Dendritic cell treated with granulocyte-macrophage colony-stimulating factor and Interleukin-4, amounts not matched to agents 40 ng/mL and 50 ng/mL, for 4 days (primary cell): ENCODE measurements at regions of chr12 and their contacts with region 1.

Region 1: DNA sequence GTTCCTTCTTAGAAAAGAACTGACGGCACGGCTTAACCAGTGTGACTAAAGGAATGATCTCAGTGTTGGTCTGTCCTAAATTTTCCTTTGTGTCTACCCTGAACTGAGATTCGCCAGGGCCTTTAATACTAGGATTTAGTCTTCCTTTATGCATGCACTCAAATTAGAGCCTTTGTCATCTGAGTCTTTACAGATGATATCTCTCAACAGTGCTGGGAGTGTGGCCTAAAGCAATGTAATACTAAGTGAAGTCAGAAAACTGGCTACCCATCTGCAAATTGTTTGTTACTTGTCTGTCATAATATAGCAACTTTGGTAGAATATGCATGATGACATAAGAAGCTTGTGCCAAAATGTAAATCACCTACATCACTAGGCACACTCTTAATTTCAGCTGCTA is 95.4 kb downstream of the PTPRO start:
- H3K4me3 Mint-ChIP-seq: no peak overlapping the region
- H3K27ac Mint-ChIP-seq: no peak overlapping the region
- H3K4me1 Mint-ChIP-seq: peaks cover 10% of the 10 kb centered on the region
- H3K27me3 Mint-ChIP-seq: peaks cover 20% of the 10 kb centered on the region

Region 2: DNA sequence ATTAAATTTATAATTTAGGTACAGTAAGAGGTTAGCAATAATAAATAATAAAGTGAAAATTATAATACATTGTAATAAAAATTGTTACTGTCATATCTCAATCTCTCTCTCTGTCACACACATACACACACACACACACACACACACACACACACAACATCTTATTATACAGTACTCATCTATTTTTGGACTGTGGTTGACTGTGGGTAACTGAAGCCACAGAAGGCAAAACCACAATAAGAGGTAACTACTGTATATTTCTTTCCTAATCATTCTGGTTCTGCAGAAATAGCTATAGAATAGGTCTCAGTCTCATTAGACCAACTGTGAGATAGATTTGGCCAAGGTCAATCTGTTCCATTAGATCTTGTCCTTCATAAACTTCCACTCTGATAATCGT is 128.5 kb before region 1 on chr12:
- intact Hi-C with region 1: loop called (anchors 10 kb)
- H3K4me3 Mint-ChIP-seq: no peak overlapping the region
- H3K27ac Mint-ChIP-seq: no peak overlapping the region
- H3K4me1 Mint-ChIP-seq: no peaks in the 10 kb centered on the region
- H3K27me3 Mint-ChIP-seq: peaks cover 25% of the 10 kb centered on the region